Ascending aorta (tissue), 2 donors: ENCODE measurements at regions of chr10 and their contacts with region 1.

Region 1: GRCh38 chr10:75375838-75376237 is 25.7 kb downstream of the ZNF503 start:
- DNase-seq: no peak
- H3K4me3 ChIP-seq: no peak overlapping the region
- H3K27ac ChIP-seq: no peak overlapping the region
- H3K4me1 ChIP-seq: no peaks in the 10 kb centered on the region
- H3K27me3 ChIP-seq: no peaks in the 10 kb centered on the region
- CTCF ChIP-seq: no peak

Region 2: DNA sequence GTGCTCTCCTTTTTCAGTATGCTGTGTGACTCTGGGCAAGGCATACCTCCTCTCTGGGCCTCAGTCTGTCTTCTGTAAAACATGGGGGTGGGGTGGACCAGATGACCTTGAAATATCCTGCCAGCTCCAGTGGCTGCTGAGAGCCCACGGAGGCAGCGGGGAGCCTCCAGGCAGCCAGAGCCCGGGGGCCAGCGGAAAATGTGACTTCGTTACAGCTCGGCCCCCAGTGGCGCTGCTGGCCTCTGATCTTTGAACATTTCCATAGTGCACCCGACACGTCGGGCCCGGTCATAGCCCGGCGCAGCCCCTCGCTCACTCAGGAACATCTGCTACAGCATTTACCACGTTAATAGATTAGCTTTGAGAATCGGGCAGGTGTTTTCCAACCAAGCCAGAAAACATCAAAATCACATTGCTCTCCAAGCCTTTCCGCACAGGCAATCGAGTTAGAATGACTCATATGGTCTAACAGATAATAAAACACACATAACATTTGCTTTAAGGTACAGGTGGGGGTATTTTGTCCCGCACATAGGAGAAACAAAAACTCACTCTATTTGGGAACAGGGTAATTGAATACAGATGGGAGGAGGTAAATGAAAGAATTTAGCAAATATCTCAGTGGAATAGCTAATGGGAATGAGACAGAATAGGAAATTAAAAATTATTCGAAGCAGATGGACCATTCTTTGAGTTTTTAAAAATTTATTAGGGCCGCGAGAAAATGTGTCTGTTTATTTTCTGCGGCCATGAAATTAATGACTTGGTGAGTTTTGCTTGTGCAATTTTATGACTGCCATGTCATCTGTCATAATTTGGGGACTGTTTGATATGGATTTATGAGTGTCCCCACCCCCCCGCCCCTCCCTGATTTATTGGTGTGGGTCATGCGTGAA is 113.8 kb before region 1 on chr10:
- intact Hi-C with region 1: loop called (anchors 10 kb)
- DNase-seq: no peak
- H3K4me3 ChIP-seq: no peak overlapping the region
- H3K27ac ChIP-seq: no peak overlapping the region
- H3K4me1 ChIP-seq: no peaks in the 10 kb centered on the region
- H3K27me3 ChIP-seq: no peaks in the 10 kb centered on the region
- CTCF ChIP-seq: no peak

Region 3: DNA sequence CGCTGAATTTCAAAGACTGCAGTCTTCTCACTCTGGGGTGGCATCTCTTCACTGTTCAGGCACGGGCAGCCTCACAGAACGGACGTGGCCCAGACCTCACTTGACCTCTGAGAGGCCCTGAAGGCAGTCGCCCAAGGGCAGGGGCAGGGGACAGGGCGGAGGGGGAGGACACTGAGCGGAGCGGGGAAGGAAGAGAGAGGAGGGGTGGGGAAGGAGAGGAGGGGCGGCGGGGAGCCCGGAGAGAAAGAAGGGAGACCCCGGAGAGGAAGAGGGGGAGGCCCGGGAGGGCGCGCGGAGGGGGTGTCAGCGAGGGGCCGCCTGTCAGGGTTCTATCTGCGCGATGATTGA is 81.3 kb before region 1 on chr10:
- intact Hi-C with region 1: no loop called
- DNase-seq: peak in 1 of 2 donors; percentile 76
- H3K4me3 ChIP-seq: peak overlapping the region; percentile 79 to 92
- H3K27ac ChIP-seq: peak overlapping the region; percentile 91 to 94
- H3K4me1 ChIP-seq: peaks cover 11 to 23% of the 10 kb centered on the region in 2 donors
- H3K27me3 ChIP-seq: no peaks in the 10 kb centered on the region
- CTCF ChIP-seq: no peak

Region 4: DNA sequence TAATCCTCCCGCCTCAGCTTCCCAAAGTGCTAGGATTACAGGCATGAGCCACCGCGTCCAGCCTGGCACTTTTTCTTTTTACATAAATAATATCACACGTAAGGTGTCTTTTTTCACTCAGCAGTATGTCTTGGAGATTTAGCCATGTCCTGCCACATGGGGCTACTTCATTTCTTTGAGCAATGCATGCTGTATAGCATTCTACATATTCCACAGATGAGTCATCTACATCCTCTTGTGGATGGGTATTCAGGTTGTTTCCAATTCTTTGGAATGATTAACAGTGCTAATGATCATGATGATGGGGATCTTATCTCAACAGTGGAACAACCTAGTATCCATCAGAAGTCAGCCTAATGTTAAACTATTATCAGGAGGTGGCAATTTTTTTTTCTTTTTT is 25.0 kb before region 1 on chr10:
- intact Hi-C with region 1: no loop called
- DNase-seq: no peak
- H3K4me3 ChIP-seq: no peak overlapping the region
- H3K27ac ChIP-seq: no peak overlapping the region
- H3K4me1 ChIP-seq: no peaks in the 10 kb centered on the region
- H3K27me3 ChIP-seq: no peaks in the 10 kb centered on the region
- CTCF ChIP-seq: no peak

Region 5: GRCh38 chr10:75395066-75395931 is 19.5 kb after region 1 on chr10:
- intact Hi-C with region 1: no loop called
- DNase-seq: peak in 1 of 2 donors; percentile 68
- H3K4me3 ChIP-seq: peak overlapping the region; percentile 89 to 95
- H3K27ac ChIP-seq: peak overlapping the region; percentile 97 to 98
- H3K4me1 ChIP-seq: peaks cover 0 to 19% of the 10 kb centered on the region in 2 donors
- H3K27me3 ChIP-seq: no peaks in the 10 kb centered on the region
- CTCF ChIP-seq: peak; percentile 72 to 76 (median 74)